Activated naive CD4-positive, alpha-beta T cell treated with anti-CD3 and anti-CD28 coated beads for 36 hours (primary cell): ENCODE measurements at regions of chr3 and their contacts with region 1.

Region 1: GRCh38 chr3:25594007-25594502 is 70.7 kb downstream of the TOP2B start:
- DNase-seq: no peak
- H3K4me3 Mint-ChIP-seq: no peak overlapping the region
- H3K27ac Mint-ChIP-seq: no peak overlapping the region
- H3K4me1 Mint-ChIP-seq: peaks cover 1% of the 10 kb centered on the region
- H3K27me3 Mint-ChIP-seq: no peaks in the 10 kb centered on the region

Region 2: GRCh38 chr3:24264748-24265158 is 1329.3 kb before region 1 on chr3:
- CTCF ChIA-PET with region 1: no interaction called
- intact Hi-C with region 1: loop called (anchors 10 kb)
- DNase-seq: no peak
- H3K4me3 Mint-ChIP-seq: no peak overlapping the region
- H3K27ac Mint-ChIP-seq: no peak overlapping the region
- H3K4me1 Mint-ChIP-seq: no peaks in the 10 kb centered on the region
- H3K27me3 Mint-ChIP-seq: peaks cover 7% of the 10 kb centered on the region

Region 3: GRCh38 chr3:24688446-24689148 is 905.5 kb before region 1 on chr3:
- CTCF ChIA-PET with region 1: no interaction called
- intact Hi-C with region 1: loop called (anchors 2 kb)
- DNase-seq: no peak
- H3K4me3 Mint-ChIP-seq: no peak overlapping the region
- H3K27ac Mint-ChIP-seq: no peak overlapping the region
- H3K4me1 Mint-ChIP-seq: peaks cover 1% of the 10 kb centered on the region
- H3K27me3 Mint-ChIP-seq: peaks cover 7% of the 10 kb centered on the region

Region 4: DNA sequence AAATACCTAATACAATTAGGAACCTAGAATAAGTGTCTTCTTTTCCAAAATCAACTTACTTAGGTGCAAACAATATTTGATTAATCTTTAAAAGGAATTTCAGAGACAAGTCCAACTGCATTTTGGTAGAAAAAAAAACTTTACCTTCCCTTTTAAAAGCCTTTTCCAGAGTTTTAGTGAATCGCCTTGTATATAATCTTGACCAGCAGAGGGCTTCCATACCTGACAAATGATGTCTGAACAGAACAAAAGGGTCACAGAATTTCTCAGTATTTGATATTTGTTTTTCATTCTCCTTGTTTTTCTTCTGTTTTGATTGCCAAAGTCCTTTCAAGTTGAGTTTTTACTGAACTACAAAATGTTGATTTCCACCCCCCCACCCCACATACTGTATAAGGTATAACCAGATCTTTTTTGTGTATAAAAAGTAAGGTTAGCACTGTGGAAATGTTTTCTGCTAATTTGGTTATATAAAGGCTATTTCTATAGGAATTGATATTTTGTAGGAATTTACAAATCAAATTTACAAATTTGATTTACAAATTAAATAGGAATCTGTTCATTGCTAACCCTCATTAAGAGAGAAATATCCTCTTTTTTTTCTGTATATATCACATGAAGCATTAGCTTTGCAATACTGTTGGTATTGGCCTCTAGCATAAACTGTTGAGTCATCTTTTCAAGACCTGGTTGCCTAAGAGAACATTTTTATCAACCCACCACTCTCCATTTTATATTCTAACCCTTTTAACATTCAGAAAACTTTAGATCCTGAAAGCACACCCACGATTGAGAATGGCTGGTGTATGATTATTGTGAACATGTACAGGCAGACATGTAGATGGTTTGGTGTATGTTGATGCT is 630.1 kb before region 1 on chr3:
- CTCF ChIA-PET with region 1: no interaction called
- intact Hi-C with region 1: loop called (anchors 1 kb)
- DNase-seq: no peak
- H3K4me3 Mint-ChIP-seq: no peak overlapping the region
- H3K27ac Mint-ChIP-seq: no peak overlapping the region
- H3K4me1 Mint-ChIP-seq: no peaks in the 10 kb centered on the region
- H3K27me3 Mint-ChIP-seq: no peaks in the 10 kb centered on the region

Region 5: DNA sequence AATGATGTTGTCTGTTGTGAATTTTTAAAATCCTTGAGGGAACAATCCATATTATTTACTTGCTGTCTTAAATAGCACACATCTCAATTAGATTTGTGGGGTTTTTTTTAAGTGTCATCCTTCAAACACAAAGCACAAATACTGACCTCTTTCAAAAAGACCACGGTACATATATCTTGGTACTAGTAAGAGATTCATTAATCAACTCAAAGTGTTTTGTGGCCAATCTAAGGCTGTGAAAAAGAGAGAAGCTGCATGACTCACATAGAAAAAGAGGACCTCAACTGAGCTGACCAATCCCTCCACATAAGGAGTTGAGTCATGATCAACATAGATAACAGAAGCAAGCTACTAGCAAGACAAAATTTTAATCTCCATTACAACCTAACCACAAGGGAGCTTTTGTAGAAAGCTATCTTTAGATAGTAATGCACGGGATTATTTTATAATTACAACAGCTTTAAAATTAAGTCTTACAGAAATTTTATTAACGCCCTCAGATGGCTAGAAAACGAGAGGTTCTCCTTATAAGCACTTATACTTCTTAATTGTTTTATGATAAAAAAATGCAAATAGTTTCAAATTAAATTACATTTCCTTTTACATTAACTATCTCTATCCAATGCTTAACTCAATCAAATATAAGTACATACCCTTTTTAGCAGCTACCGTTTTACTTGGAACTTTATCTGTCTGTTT is 10.2 kb after region 1 on chr3:
- CTCF ChIA-PET with region 1: interaction called, 22 read pairs
- intact Hi-C with region 1: no loop called
- DNase-seq: no peak
- H3K4me3 Mint-ChIP-seq: no peak overlapping the region
- H3K27ac Mint-ChIP-seq: no peak overlapping the region
- H3K4me1 Mint-ChIP-seq: no peaks in the 10 kb centered on the region
- H3K27me3 Mint-ChIP-seq: no peaks in the 10 kb centered on the region

Region 6: DNA sequence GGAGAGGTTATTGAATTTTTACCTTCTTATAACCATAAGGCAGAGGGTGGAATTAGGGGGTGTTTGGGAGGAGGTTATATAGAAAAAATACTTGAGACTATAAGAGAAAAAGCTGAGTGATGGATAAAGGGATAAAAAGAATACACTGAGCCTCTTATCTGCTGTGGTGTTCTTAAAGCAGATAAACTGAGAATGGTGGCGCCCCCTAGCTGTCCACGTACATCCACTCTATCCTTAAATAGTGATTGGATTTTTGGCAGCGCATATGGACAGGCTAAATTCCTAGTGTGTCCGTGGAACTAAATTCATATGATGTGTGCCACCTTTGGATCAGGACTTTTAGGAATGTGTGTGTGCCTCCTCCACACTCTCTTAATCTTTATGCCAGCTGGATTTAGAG is 316.9 kb after region 1 on chr3:
- CTCF ChIA-PET with region 1: no interaction called
- intact Hi-C with region 1: loop called (anchors 2 kb)
- DNase-seq: peak; percentile 76
- H3K4me3 Mint-ChIP-seq: no peak overlapping the region
- H3K27ac Mint-ChIP-seq: no peak overlapping the region
- H3K4me1 Mint-ChIP-seq: no peaks in the 10 kb centered on the region
- H3K27me3 Mint-ChIP-seq: no peaks in the 10 kb centered on the region

Region 7: DNA sequence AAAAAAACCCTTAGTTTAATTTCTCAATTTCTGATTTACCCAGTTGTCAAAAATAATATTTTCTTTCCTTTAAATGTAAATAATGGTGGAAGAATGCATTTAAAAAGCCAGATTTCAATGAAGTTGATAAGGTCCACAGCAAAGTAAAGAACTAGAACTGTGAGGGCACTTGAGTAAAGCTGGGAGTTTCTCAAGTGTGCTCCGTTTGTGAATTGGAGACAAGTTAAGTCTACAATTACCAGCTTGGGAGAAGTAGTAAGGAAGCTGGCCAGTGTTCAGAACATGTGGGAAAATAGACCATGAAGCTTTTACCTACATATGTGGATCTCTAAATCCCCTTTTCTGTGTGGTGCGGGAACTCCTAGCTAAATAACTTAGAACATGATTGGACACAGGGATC is 435.3 kb after region 1 on chr3:
- CTCF ChIA-PET with region 1: no interaction called
- intact Hi-C with region 1: no loop called
- DNase-seq: no peak
- H3K4me3 Mint-ChIP-seq: no peak overlapping the region
- H3K27ac Mint-ChIP-seq: no peak overlapping the region
- H3K4me1 Mint-ChIP-seq: no peaks in the 10 kb centered on the region
- H3K27me3 Mint-ChIP-seq: no peaks in the 10 kb centered on the region